B cell (primary cell): ENCODE measurements at regions of chr14 and their contacts with region 1.

Region 1: DNA sequence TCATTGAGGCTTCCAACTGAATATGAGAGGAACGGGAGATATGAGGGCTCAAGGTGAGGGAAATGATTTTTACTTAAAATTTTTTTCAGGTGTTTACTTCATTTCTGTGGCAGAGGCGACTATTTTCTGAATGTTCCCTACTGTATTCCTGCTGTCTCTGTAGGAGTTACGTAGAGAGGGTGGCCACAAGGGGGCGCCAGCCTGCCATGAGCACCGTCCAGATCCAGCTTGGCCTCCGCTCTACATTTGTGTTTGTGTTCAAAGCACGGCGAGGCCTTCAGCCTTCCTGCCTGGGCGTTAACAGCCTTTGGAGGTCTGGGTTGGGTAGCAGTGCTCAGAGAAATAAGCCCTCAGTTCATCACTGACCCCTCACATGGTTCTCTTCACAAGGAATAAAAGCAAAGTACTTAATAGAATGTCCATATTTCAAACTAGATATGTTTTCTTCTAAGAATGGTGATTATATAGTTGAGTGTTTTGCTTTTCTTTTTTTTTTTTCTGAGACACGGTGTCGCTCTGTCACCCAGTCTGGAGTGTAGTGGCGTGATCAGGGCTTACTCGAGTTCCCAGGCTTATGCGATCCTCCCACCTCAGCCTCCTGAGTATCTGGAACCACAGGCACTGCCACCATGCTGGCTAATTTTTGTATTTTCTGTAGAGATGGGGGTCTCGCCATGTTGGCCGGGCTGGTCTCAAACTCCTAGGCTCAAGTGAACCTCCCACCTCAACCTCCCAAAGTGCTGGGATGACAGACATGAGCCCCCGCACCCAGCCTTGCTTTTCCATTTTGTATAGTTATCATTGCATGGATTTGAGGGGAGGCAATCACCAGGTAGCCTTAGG is 22.3 kb downstream of the CKB start:
- DNase-seq: peak; percentile 81
- ATAC-seq: peak; percentile 74
- H3K4me3 ChIP-seq: no peak overlapping the region
- H3K4me3 Mint-ChIP-seq: no peak overlapping the region
- H3K27ac ChIP-seq: no peak overlapping the region
- H3K27ac Mint-ChIP-seq: peak overlapping the region; percentile 32
- H3K4me1 ChIP-seq: no peaks in the 10 kb centered on the region
- H3K4me1 Mint-ChIP-seq: peaks cover 8% of the 10 kb centered on the region
- H3K27me3 ChIP-seq: no peaks in the 10 kb centered on the region
- H3K27me3 Mint-ChIP-seq: no peaks in the 10 kb centered on the region
- CTCF ChIP-seq: peak; percentile 96

Region 2: DNA sequence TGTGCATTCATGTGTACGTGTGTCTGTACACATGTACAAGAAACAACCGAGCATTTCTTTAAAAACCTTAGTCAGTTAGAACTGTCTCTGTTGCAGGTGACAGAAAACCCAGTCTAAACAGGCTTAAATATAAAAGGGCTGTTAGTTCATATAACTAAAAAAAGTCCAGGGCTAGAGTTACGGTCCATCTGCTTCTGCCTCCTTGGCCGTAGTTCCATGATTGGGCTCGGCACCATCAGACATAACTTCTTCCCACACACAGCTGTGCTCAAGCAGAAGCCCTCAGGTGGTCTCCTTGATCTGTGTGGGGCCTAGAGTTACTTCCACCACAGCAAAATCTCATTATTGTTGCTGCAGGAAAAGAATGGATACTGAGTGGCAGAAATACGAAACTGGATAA is 12.3 kb before region 1 on chr14:
- CTCF ChIA-PET with region 1: interaction called, 13 read pairs
- POLR2A ChIA-PET with region 1: no interaction called
- intact Hi-C with region 1: no loop called
- DNase-seq: no peak
- ATAC-seq: no peak
- H3K4me3 ChIP-seq: no peak overlapping the region
- H3K4me3 Mint-ChIP-seq: no peak overlapping the region
- H3K27ac ChIP-seq: no peak overlapping the region
- H3K27ac Mint-ChIP-seq: no peak overlapping the region
- H3K4me1 ChIP-seq: no peaks in the 10 kb centered on the region
- H3K4me1 Mint-ChIP-seq: no peaks in the 10 kb centered on the region
- H3K27me3 ChIP-seq: no peaks in the 10 kb centered on the region
- H3K27me3 Mint-ChIP-seq: no peaks in the 10 kb centered on the region
- CTCF ChIP-seq: no peak

Region 3: GRCh38 chr14:103512701-103513611 is 12.6 kb after region 1 on chr14:
- CTCF ChIA-PET with region 1: interaction called, 18 read pairs
- POLR2A ChIA-PET with region 1: no interaction called
- intact Hi-C with region 1: no loop called
- DNase-seq: no peak
- ATAC-seq: no peak
- H3K4me3 ChIP-seq: no peak overlapping the region
- H3K4me3 Mint-ChIP-seq: no peak overlapping the region
- H3K27ac ChIP-seq: no peak overlapping the region
- H3K27ac Mint-ChIP-seq: peak overlapping the region; percentile 26
- H3K4me1 ChIP-seq: no peaks in the 10 kb centered on the region
- H3K4me1 Mint-ChIP-seq: no peaks in the 10 kb centered on the region
- H3K27me3 ChIP-seq: no peaks in the 10 kb centered on the region
- H3K27me3 Mint-ChIP-seq: no peaks in the 10 kb centered on the region
- CTCF ChIP-seq: no peak

Region 4: GRCh38 chr14:103520657-103521437 is 20.5 kb after region 1 on chr14:
- CTCF ChIA-PET with region 1: interaction called, 15 read pairs
- POLR2A ChIA-PET with region 1: no interaction called
- intact Hi-C with region 1: no loop called
- DNase-seq: peak; percentile 85
- ATAC-seq: peak; percentile 78
- H3K4me3 ChIP-seq: peak overlapping the region in 4 of 5 experiments; percentile 52 to 75 (median 59)
- H3K4me3 Mint-ChIP-seq: peak overlapping the region; percentile 74
- H3K27ac ChIP-seq: no peak overlapping the region
- H3K27ac Mint-ChIP-seq: peak overlapping the region; percentile 50
- H3K4me1 ChIP-seq: peaks cover 22 to 31% of the 10 kb centered on the region in 2 donors
- H3K4me1 Mint-ChIP-seq: peaks cover 17% of the 10 kb centered on the region
- H3K27me3 ChIP-seq: peaks cover 0 to 32% (median 11%) of the 10 kb centered on the region in 4 experiments
- H3K27me3 Mint-ChIP-seq: peaks cover 3% of the 10 kb centered on the region
- CTCF ChIP-seq: peak; percentile 67

Region 5: DNA sequence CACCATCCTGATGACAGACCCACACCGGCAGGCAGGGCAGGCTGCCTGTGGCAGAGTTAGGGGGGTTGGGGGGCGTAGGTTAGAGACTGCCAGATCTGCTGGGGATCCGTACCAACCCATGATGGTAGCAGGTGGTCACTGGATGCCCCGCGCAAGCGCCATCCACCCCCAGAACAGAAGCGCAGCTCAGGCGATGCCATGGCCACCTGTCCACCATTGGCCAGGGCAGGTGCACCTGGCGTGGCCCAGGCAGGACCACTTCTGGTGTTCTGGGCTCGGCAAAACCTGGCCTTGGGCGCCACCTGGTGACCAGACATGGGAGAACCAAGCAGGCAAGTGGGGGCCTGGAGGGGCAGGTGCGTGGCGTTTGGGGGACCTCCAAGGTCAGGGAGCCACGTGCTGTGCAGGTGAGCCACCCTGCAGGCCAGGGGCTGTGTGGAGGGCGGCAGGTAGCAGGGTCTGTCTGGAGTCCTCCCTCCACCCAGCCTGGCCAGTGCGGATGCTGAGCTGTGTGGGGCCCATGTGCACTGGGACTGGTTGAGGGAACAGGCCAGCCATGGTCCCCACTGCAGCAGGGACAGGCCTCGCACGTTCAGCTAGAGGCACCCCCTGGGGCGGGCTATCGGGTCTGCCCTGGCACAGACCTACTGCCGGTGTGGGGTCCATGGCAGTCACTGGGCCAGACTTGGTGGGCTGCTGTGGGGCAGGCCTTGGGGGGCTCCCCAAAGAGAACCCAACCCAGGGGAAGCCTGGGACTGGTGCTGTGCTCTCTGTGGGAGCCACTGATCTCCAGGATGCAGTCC is 46.5 kb after region 1 on chr14:
- CTCF ChIA-PET with region 1: interaction called, 19 read pairs
- POLR2A ChIA-PET with region 1: no interaction called
- intact Hi-C with region 1: loop called (anchors 1 kb)
- DNase-seq: peak; percentile 82
- ATAC-seq: peak; percentile 83
- H3K4me3 ChIP-seq: no peak overlapping the region
- H3K4me3 Mint-ChIP-seq: no peak overlapping the region
- H3K27ac ChIP-seq: no peak overlapping the region
- H3K27ac Mint-ChIP-seq: no peak overlapping the region
- H3K4me1 ChIP-seq: peaks cover 0 to 6% of the 10 kb centered on the region in 2 donors
- H3K4me1 Mint-ChIP-seq: peaks cover 4% of the 10 kb centered on the region
- H3K27me3 ChIP-seq: peaks cover 0 to 22% (median 2%) of the 10 kb centered on the region in 4 experiments
- H3K27me3 Mint-ChIP-seq: no peaks in the 10 kb centered on the region
- CTCF ChIP-seq: peak; percentile 95